WTC11 (cell line): ENCODE measurements at regions of chr17 and their contacts with region 1.

Region 1: DNA sequence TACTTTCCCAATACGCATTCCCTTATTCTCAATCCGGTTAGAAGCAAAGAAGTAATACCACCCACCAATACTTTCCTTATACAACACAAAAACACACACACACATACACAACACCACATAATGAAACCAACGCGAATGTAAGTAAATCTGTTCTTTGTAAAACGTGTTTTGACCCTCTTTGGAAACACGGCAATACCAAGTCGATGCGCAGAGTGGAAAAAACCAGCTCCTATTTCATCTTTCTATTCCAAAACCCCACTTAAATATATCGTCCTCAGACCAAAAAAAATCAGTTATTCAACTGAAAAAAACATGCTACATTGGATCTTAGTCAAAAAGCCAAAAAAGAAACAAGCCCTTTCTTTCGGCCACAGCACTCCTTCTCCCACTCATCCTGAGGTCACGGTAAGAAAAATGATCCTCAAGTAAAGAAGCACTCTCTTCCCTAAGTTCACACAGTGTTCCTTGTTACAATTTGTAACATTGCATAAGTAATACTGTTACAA is 31.0 kb upstream of the ARL4D start:
- DNase-seq: no peak
- ATAC-seq: peak; percentile 14
- H3K4me3 Mint-ChIP-seq: peak overlapping the region; percentile 74
- H3K27ac Mint-ChIP-seq: peak overlapping the region; percentile 100
- H3K4me1 Mint-ChIP-seq: peaks cover 39% of the 10 kb centered on the region
- H3K27me3 Mint-ChIP-seq: no peaks in the 10 kb centered on the region
- CTCF ChIP-seq: no peak

Region 2: DNA sequence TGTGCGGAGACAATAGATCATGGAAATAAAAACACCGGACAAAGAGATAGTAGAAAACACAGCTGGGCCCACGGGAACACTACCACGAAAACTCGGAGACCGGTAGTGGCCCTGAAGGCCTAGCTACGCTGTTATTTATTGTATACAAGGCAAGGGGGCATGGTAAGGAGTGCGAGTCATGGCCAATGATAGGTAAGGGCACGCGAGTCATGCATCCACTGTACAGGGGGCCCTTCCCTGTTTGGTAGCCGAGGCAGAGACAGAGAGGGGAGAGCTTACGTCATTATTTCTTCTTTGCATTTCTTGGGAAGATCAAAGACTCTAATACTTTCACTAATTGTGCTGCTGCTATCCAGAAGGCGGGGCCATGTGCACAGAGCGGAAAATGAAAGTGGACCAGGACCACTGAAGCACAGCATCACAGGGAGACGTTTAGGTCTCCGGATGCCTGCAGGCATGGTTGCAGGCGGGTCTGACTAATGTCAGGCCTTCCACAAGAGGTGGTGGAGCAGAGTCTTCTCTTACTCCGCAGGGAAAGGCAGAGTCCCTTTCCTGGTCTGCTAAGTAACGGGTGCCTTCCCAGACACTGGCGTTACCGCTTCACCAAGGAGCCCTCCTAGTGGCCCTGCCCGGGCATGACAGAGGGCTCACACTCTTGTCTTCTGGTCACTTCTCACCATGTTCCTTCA is 43.4 kb before region 1 on chr17:
- CTCF ChIA-PET with region 1: no interaction called
- POLR2A ChIA-PET with region 1: no interaction called
- DNase-seq: peak; percentile 46
- ATAC-seq: peak; percentile 57
- H3K4me3 Mint-ChIP-seq: no peak overlapping the region
- H3K27ac Mint-ChIP-seq: peak overlapping the region; percentile 9; the same call in 1 of the 2 replicates
- H3K4me1 Mint-ChIP-seq: peaks cover 9% of the 10 kb centered on the region
- H3K27me3 Mint-ChIP-seq: peaks cover 5% of the 10 kb centered on the region; the same call in 1 of the 2 replicates
- CTCF ChIP-seq: peak; percentile 28; the same call in 1 of the 2 replicates

Region 3: DNA sequence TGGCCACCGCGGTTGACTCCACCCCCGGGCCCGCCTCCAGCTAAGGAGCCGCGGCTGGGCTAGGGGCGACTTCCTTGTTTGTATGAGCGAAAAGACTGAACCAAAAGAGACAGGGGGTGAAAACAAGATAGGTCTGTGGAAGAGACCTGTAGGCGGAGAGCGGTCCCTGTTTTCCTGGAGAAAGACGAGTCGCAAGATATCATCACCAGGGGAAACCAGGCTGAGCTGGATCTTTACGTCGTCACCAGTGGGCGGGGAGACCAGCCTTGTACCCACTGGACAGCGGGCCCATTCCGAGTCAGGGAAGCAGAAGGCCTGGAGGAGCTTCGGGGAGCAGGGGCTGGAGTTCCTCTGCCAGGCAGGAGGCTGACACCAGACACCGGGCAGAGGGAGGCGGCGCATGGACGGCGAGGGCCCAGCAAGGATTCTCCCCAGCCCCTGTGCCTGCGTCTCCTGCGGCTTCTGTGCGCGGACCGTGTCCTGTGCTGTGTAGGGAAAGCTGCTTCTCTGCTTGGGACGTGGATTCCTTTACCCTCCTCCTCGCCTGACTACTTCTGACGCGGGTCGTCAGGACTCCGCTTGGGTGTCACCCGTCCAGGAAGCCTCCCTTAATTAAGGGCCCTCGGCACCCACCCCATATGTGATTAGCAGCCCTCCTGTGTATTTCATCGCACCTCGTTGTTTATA is 20.7 kb after region 1 on chr17:
- CTCF ChIA-PET with region 1: interaction called, 24 read pairs
- POLR2A ChIA-PET with region 1: interaction called, 43 read pairs
- DNase-seq: peak; percentile 91
- ATAC-seq: peak; percentile 89
- H3K4me3 Mint-ChIP-seq: peak overlapping the region; percentile 87
- H3K27ac Mint-ChIP-seq: peak overlapping the region; percentile 99
- H3K4me1 Mint-ChIP-seq: peaks cover 12% of the 10 kb centered on the region; the same call in 1 of the 2 replicates
- H3K27me3 Mint-ChIP-seq: peaks cover 2% of the 10 kb centered on the region; the same call in 1 of the 2 replicates
- CTCF ChIP-seq: no peak